ENCODE measurements at regions of chr5 and their contacts with region 1.

Region 1: GRCh38 chr5:5141625-5142532 is 1.7 kb downstream of the ADAMTS16 start:
- DNase-seq: peak in 1 of 2 donors; percentile 56
- H3K4me3 ChIP-seq: no peak overlapping the region
- H3K27ac ChIP-seq: no peak overlapping the region
- H3K4me1 ChIP-seq: peaks cover 15% of the 10 kb centered on the region
- H3K27me3 ChIP-seq: peaks cover 15% of the 10 kb centered on the region
- CTCF ChIP-seq: peak; percentile 64 to 76 (median 72)
- POLR2A ChIP-seq: no peak

Region 2: DNA sequence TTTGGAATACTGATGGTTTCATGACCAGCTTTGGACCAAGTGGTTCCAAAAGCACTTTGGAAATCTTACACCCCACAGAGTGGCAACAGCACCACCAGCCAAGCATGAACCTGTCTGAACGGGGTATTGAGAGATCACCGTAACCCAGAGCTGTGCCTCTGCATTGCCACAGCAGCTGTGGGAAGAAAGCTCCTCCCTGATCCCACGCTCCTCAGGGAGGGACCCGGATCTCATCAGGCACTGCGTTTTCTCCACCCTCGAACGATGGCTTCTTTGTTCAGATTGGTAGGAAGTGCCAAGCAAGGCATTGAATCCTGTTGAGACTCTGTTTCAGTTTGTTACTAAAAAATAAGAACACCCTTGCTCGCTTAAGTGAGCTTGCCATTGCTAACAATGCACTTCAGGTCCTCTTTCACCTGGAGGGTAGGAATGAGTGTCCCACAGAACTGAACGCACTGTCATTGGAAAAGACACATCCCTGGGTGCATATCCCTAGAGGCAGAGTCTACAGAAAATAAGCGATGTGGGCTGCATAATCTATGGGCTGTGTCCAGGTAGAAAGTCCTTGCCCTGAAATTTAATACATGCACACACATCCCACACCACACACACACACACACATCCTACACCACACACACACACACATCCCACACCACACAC is 162.6 kb after region 1 on chr5:
- intact Hi-C with region 1: no loop called
- DNase-seq: no peak
- H3K4me3 ChIP-seq: no peak overlapping the region
- H3K27ac ChIP-seq: no peak overlapping the region
- H3K4me1 ChIP-seq: peaks cover 12% of the 10 kb centered on the region
- H3K27me3 ChIP-seq: no peaks in the 10 kb centered on the region
- CTCF ChIP-seq: no peak
- POLR2A ChIP-seq: no peak

Region 3: DNA sequence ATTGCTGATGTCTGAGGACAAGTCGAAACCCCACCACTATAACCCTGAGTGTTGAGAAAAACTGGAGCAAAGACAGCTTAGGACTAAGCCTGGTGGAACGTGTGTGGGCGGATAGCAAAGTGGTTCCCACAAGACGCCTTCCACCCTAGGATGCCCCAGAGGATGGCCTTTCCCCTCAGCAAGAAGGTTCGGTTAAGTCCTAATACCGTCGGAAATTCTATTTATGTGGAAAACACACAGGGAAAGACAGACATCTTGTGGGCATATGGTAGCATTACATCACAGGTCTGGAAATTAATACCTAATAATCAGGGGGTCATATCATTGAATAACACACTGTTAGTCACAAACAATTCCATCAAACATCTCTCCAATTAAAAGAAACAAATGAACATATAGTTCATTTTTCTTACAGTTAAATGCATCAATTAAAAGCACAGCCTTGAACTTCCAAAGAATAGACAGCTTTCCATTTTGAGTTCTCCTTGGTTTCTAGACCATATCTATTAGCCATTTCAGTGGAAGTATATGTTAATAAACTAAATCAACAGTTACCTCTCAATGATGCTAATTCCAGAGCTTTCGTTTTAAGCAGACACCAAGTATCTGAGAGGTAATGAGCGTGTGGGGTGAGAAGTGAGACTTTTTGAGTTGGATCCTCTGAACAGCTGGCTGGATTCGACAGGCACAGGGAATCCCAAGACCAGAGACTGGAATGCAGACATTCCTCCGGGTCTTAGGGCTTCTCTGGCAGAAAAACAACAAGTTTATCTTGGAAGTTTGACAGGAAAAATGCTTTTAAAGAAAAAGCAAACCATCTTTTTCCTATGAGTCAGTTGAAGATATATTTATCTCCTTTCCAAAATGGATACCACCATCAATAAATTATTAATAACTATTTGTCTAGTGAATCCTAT is 277.7 kb after region 1 on chr5:
- intact Hi-C with region 1: loop called (anchors 2 kb)
- DNase-seq: no peak
- H3K4me3 ChIP-seq: no peak overlapping the region
- H3K27ac ChIP-seq: no peak overlapping the region
- H3K4me1 ChIP-seq: peaks cover 25% of the 10 kb centered on the region
- H3K27me3 ChIP-seq: no peaks in the 10 kb centered on the region
- CTCF ChIP-seq: peak in 2 of 3 experiments; percentile 58 to 72
- POLR2A ChIP-seq: no peak

Measured in vagina (tissue), 2 donors.